ENCODE measurements at regions of chr10 and their contacts with region 1.

Region 1: DNA sequence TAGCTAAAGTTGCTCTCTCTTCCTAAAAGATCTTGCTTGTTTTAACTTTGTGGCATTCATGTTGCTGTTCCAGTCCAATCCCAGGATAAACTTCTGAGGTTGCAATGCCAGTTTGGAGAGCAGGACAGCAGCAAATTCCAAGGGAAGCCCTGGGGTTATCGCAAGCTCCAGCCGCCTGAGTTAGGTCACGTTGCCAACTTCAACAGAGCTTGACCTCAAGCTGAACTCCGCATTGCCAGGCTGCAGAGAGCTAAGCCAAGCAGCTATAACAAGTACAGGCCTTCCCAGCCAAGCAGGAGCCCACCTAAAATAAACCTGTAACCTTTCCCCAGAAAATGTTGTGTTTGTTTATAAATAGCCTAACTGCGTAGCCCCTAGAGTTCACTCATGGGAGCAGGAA is 138.9 kb upstream of the LYZL1 start:
- DNase-seq: no peak
- ATAC-seq: no peak
- H3K4me3 ChIP-seq: no peak overlapping the region
- H3K27ac ChIP-seq: no peak overlapping the region
- H3K4me1 ChIP-seq: no peaks in the 10 kb centered on the region
- H3K27me3 ChIP-seq: peaks cover 3% of the 10 kb centered on the region; the same call in 1 of the 2 replicates
- CTCF ChIP-seq: no peak
- POLR2A ChIP-seq: no peak
- RAD21 ChIP-seq: no peak

Region 2: DNA sequence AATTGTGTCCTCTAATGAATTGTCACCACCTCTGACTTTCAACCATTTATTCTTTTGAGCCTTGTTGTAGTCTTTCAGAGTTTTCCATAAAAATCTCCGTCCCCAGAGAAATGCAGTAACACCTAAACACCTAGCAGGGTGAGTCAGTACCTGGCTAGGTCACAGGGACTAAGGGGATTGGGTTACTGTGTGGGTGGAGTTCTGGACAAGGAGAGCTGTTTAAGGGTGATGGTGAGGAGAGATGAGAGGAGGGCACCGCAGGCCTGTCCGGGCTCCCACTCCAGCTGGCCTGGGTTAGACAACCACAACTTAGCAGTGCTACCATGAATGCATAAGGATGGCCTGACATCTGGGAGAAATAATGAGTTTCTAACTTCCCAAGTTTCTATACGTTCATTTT is 47.3 kb before region 1 on chr10:
- CTCF ChIA-PET with region 1: no interaction called
- POLR2A ChIA-PET with region 1: no interaction called
- dilution Hi-C with region 1: no loop called
- in situ Hi-C with region 1: no loop called
- intact Hi-C with region 1: loop called (anchors 1 kb)
- DNase-seq: no peak
- ATAC-seq: no peak
- H3K4me3 ChIP-seq: no peak overlapping the region
- H3K27ac ChIP-seq: no peak overlapping the region
- H3K4me1 ChIP-seq: peaks cover 13% of the 10 kb centered on the region
- H3K27me3 ChIP-seq: peaks cover 10% of the 10 kb centered on the region
- CTCF ChIP-seq: no peak
- POLR2A ChIP-seq: no peak
- RAD21 ChIP-seq: no peak